Endothelial cell of umbilical vein (primary cell): ENCODE measurements at regions of chr6 and their contacts with region 1.

Region 1: GRCh38 chr6:42217519-42218367 is at the start of gene MRPS10:
- DNase-seq: peak; percentile 94
- H3K4me3 ChIP-seq: peak within 1 kb of the TSS; percentile 49 to 99 (median 92)
- H3K27ac ChIP-seq: peak within 1 kb of the TSS; percentile 77
- H3K4me1 ChIP-seq: peaks cover 5% of the 10 kb centered on the region
- H3K27me3 ChIP-seq: no peaks in the 10 kb centered on the region
- CTCF ChIP-seq: no peak
- POLR2A ChIP-seq: peak; percentile 90
- total RNA-seq, gene MRPS10: 35.3 and 37.7 TPM in 2 replicates

Region 2: GRCh38 chr6:41920921-41921711 is 296.6 kb before region 1 on chr6 and contains the starts of genes BYSL and MED20:
- CTCF ChIA-PET with region 1: interaction called, 6 read pairs
- POLR2A ChIA-PET with region 1: no interaction called
- dilution Hi-C with region 1: no loop called
- intact Hi-C with region 1: loop called (anchors 2 kb)
- DNase-seq: peak; percentile 93
- H3K4me3 ChIP-seq: peak within 1 kb of the TSS; percentile 54 to 83 (median 82)
- H3K27ac ChIP-seq: peak within 1 kb of the TSS; percentile 94
- H3K4me1 ChIP-seq: peaks cover 38% of the 10 kb centered on the region
- H3K27me3 ChIP-seq: no peaks in the 10 kb centered on the region
- CTCF ChIP-seq: peak; percentile 98
- POLR2A ChIP-seq: peak; percentile 72
- total RNA-seq, gene BYSL: 41.8 and 45.7 TPM in 2 replicates
- total RNA-seq, gene MED20: 25.5 and 30.4 TPM in 2 replicates

Region 3: GRCh38 chr6:42086046-42087035 is 131.4 kb before region 1 on chr6:
- CTCF ChIA-PET with region 1: interaction called, 11 read pairs
- POLR2A ChIA-PET with region 1: no interaction called
- dilution Hi-C with region 1: no loop called
- intact Hi-C with region 1: no loop called
- DNase-seq: peak; percentile 73
- H3K4me3 ChIP-seq: no peak overlapping the region
- H3K27ac ChIP-seq: no peak overlapping the region
- H3K4me1 ChIP-seq: peaks cover 5% of the 10 kb centered on the region
- H3K27me3 ChIP-seq: no peaks in the 10 kb centered on the region
- CTCF ChIP-seq: peak; percentile 31 to 51
- POLR2A ChIP-seq: no peak

Region 4: DNA sequence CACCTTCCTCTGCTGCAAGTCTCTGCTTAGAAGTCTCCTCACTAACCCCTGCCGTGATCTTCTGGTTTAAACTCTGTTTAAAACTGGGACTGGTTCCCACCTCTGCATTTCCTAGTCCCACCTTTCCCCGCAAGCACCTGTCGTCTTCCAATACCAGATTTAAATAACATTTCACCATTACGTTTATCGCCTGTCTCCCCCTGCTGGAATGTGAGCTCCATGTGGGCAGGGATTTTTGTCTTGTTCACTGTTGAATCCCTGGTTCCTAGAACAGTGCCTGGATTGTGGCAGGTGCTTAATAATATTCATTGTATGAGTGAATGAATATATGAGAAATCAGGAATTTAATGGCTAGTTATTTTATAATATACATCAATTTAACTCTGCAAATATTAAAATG is 41.9 kb before region 1 on chr6:
- CTCF ChIA-PET with region 1: interaction called, 11 read pairs
- POLR2A ChIA-PET with region 1: no interaction called
- dilution Hi-C with region 1: no loop called
- intact Hi-C with region 1: no loop called
- DNase-seq: no peak
- H3K4me3 ChIP-seq: no peak overlapping the region
- H3K27ac ChIP-seq: no peak overlapping the region
- H3K4me1 ChIP-seq: no peaks in the 10 kb centered on the region
- H3K27me3 ChIP-seq: peaks cover 2 to 6% of the 10 kb centered on the region in 2 experiments
- CTCF ChIP-seq: peak in 1 of 2 donors; percentile 21
- POLR2A ChIP-seq: no peak

Region 5: GRCh38 chr6:42230345-42231321 is 12.9 kb after region 1 on chr6:
- CTCF ChIA-PET with region 1: interaction called, 11 read pairs
- POLR2A ChIA-PET with region 1: no interaction called
- dilution Hi-C with region 1: no loop called
- intact Hi-C with region 1: no loop called
- DNase-seq: peak; percentile 20
- H3K4me3 ChIP-seq: no peak overlapping the region
- H3K27ac ChIP-seq: no peak overlapping the region
- H3K4me1 ChIP-seq: peaks cover 4% of the 10 kb centered on the region
- H3K27me3 ChIP-seq: no peaks in the 10 kb centered on the region
- CTCF ChIP-seq: peak; percentile 22 to 38
- POLR2A ChIP-seq: no peak

Region 6: GRCh38 chr6:42243046-42243445 is 25.3 kb after region 1 on chr6:
- CTCF ChIA-PET with region 1: no interaction called
- POLR2A ChIA-PET with region 1: no interaction called
- dilution Hi-C with region 1: no loop called
- intact Hi-C with region 1: no loop called
- DNase-seq: peak; percentile 74
- H3K4me3 ChIP-seq: no peak overlapping the region
- H3K27ac ChIP-seq: no peak overlapping the region
- H3K4me1 ChIP-seq: no peaks in the 10 kb centered on the region
- H3K27me3 ChIP-seq: no peaks in the 10 kb centered on the region
- CTCF ChIP-seq: no peak
- POLR2A ChIP-seq: no peak

Region 7: GRCh38 chr6:42879372-42880239 is 661.9 kb after region 1 on chr6 and contains the start of gene RPL7L1:
- CTCF ChIA-PET with region 1: no interaction called
- POLR2A ChIA-PET with region 1: no interaction called
- dilution Hi-C with region 1: no loop called
- intact Hi-C with region 1: loop called (anchors 5 kb)
- DNase-seq: peak; percentile 90
- H3K4me3 ChIP-seq: peak within 1 kb of the TSS; percentile 77 to 91 (median 86)
- H3K27ac ChIP-seq: peak within 1 kb of the TSS; percentile 68
- H3K4me1 ChIP-seq: peaks cover 6% of the 10 kb centered on the region
- H3K27me3 ChIP-seq: no peaks in the 10 kb centered on the region
- CTCF ChIP-seq: no peak
- POLR2A ChIP-seq: peak; percentile 91
- total RNA-seq, gene RPL7L1: 94.4 and 103 TPM in 2 replicates